Panc1 (cell line): ENCODE measurements at regions of chr7 and their contacts with region 1.

Region 1: DNA sequence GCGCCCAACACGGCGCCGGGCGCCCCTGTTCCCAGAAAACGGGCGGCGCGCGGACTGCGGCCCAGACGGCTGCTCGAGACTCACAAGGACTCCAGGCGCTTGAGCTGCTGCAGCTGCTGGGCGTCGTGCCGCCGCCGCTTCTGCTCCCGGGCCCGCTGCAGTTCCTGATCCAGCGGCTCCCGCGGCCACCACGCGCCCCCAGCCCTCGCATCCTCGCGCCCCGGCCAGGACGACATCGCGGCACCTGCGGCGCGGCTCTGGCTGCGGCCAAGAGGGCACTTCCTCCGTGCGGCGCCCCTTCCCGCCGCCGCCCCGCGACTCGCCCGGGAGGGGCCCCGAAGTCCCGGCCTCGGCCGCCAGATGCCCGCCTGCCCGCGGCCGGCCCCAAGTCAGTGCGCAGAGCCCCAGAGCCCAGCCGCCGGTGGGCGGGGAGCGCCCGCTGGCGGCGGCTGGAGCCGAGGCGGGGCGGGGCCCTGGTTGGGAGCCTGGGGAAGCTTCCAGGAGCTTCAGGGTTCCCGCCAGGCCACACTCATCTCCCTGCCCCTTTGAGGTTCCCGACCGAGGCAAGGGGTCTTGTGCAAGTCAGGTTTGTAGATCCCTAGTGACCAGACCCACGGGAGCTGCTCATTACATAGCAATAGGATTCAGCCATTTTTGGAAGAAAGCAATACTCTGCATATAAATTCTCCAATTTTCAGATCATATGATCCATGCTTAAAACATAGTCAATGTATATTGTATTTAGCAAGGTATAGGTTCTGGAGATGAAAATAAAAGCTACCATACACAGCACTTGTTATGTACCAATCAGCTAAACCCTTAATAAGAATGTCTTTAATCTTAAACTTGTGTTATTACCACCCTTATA is 14.2 kb upstream of the FKBP9 start:
- DNase-seq: peak; percentile 46
- ATAC-seq: peak; percentile 98
- H3K4me3 ChIP-seq: peak overlapping the region; percentile 77 to 90
- H3K27ac ChIP-seq: peak overlapping the region; percentile 89
- H3K4me1 ChIP-seq: peaks cover 5% of the 10 kb centered on the region
- H3K27me3 ChIP-seq: no peaks in the 10 kb centered on the region
- CTCF ChIP-seq: peak; percentile 98

Region 2: GRCh38 chr7:32765185-32765584 is 177.8 kb before region 1 on chr7:
- CTCF ChIA-PET with region 1: no interaction called
- POLR2A ChIA-PET with region 1: no interaction called
- in situ Hi-C with region 1: no loop called
- intact Hi-C with region 1: loop called (anchors 5 kb)
- DNase-seq: no peak
- ATAC-seq: no peak
- H3K4me3 ChIP-seq: no peak overlapping the region
- H3K27ac ChIP-seq: no peak overlapping the region
- H3K4me1 ChIP-seq: no peaks in the 10 kb centered on the region
- H3K27me3 ChIP-seq: no peaks in the 10 kb centered on the region
- CTCF ChIP-seq: no peak

Region 3: GRCh38 chr7:33044986-33045385 is 102.0 kb after region 1 on chr7:
- CTCF ChIA-PET with region 1: no interaction called
- POLR2A ChIA-PET with region 1: no interaction called
- in situ Hi-C with region 1: no loop called
- intact Hi-C with region 1: no loop called
- DNase-seq: no peak
- ATAC-seq: no peak
- H3K4me3 ChIP-seq: no peak overlapping the region
- H3K27ac ChIP-seq: peak overlapping the region; percentile 88; the same call in 1 of the 2 replicates
- H3K4me1 ChIP-seq: peaks cover 42% of the 10 kb centered on the region
- H3K27me3 ChIP-seq: no peaks in the 10 kb centered on the region
- CTCF ChIP-seq: no peak

Region 4: GRCh38 chr7:33109005-33109757 is 166.2 kb after region 1 on chr7 and contains the start of gene RP9:
- CTCF ChIA-PET with region 1: interaction called, 5 read pairs
- POLR2A ChIA-PET with region 1: interaction called, 6 read pairs
- in situ Hi-C with region 1: no loop called
- intact Hi-C with region 1: loop called (anchors 5 kb)
- DNase-seq: no peak
- ATAC-seq: peak; percentile 94
- H3K4me3 ChIP-seq: peak within 1 kb of the TSS; percentile 80 to 89
- H3K27ac ChIP-seq: peak within 1 kb of the TSS; percentile 78
- H3K4me1 ChIP-seq: peaks cover 19% of the 10 kb centered on the region
- H3K27me3 ChIP-seq: no peaks in the 10 kb centered on the region
- CTCF ChIP-seq: peak; percentile 99
- total RNA-seq, gene RP9: 22.1 TPM

Region 5: GRCh38 chr7:33487998-33488682 is 545.1 kb after region 1 on chr7:
- CTCF ChIA-PET with region 1: no interaction called
- POLR2A ChIA-PET with region 1: no interaction called
- in situ Hi-C with region 1: no loop called
- intact Hi-C with region 1: no loop called
- DNase-seq: no peak
- ATAC-seq: no peak
- H3K4me3 ChIP-seq: no peak overlapping the region
- H3K27ac ChIP-seq: no peak overlapping the region
- H3K4me1 ChIP-seq: no peaks in the 10 kb centered on the region
- H3K27me3 ChIP-seq: no peaks in the 10 kb centered on the region
- CTCF ChIP-seq: no peak